Transverse colon (tissue), 4 donors: ENCODE measurements at regions of chr11 and their contacts with region 1.

Region 1: GRCh38 chr11:80204021-80204420 is 763.2 kb upstream of the TENM4 start:
- DNase-seq: no peak
- H3K4me3 ChIP-seq: no peak overlapping the region
- H3K27ac ChIP-seq: no peak overlapping the region
- H3K4me1 ChIP-seq: no peaks in the 10 kb centered on the region
- H3K27me3 ChIP-seq: no peaks in the 10 kb centered on the region
- CTCF ChIP-seq: no peak
- EP300 ChIP-seq: no peak
- POLR2A ChIP-seq: no peak

Region 2: GRCh38 chr11:80241768-80242167 is 37.7 kb after region 1 on chr11:
- in situ Hi-C with region 1: no loop called
- intact Hi-C with region 1: no loop called
- DNase-seq: no peak
- H3K4me3 ChIP-seq: no peak overlapping the region
- H3K27ac ChIP-seq: no peak overlapping the region
- H3K4me1 ChIP-seq: no peaks in the 10 kb centered on the region
- H3K27me3 ChIP-seq: no peaks in the 10 kb centered on the region
- CTCF ChIP-seq: no peak
- EP300 ChIP-seq: no peak
- POLR2A ChIP-seq: no peak

Region 3: DNA sequence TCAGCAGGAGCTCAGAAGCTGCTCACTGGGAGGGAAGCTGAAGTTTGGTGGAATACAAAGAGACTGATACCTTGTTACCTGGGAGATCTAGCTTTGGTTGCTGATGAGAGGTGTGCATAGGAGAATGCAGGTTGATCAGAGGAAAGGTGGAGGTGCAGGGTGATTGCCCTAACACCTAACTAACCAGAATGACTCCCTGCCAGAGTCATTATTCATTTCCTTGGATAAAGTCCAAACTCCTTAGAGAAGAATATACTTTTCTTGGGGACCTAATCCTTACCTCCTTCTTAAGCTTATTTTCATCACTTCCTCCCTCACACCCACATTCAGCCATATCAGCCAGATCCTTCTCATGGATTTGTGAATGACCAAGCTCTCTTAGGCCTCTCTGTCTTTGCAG is 51.0 kb after region 1 on chr11:
- in situ Hi-C with region 1: no loop called
- intact Hi-C with region 1: loop called (anchors 1 kb)
- DNase-seq: no peak
- H3K4me3 ChIP-seq: no peak overlapping the region
- H3K27ac ChIP-seq: no peak overlapping the region
- H3K4me1 ChIP-seq: no peaks in the 10 kb centered on the region
- H3K27me3 ChIP-seq: no peaks in the 10 kb centered on the region
- CTCF ChIP-seq: no peak
- EP300 ChIP-seq: no peak
- POLR2A ChIP-seq: no peak